ENCODE measurements at regions of chr17 and their contacts with region 1.

Region 1: DNA sequence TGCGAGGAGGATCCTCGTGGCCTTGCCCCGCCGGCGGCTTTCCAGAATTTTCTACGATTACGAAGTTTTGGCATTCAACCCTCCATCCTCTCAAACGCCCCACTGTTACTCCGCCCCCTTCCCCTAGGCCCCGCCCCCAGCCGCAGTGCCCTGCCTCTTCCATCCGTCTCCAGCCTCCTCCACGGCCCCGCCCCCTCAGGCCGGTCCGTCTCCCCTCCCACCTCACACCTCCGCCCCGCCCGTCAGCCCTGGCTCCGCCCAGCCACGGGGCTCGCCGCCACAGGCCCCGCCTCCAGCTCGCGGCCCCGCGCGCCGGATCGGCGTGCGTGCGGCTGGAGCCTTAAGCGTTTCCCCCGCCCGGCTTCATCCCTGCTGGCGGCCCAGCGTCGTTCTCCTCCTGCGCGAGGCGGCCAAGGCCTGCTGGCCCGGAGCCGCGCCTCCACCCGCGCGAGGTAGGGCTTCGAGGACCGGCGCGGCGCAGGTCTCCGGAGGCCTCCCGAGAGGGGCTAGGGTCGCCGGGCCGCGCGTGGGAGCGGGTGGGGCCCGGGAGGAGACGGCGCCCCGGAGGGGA is at the starts of genes C17orf67 and DGKE:
- DNase-seq: peak; percentile 99
- H3K4me3 Mint-ChIP-seq: peak within 1 kb of the TSS; percentile 89
- H3K27ac Mint-ChIP-seq: peak within 1 kb of the TSS; percentile 70
- H3K4me1 Mint-ChIP-seq: peaks cover 55% of the 10 kb centered on the region
- H3K27me3 Mint-ChIP-seq: no peaks in the 10 kb centered on the region
- total RNA-seq, gene C17orf67: 1.9 to 2.2 TPM
- total RNA-seq, gene DGKE: 18.1 to 18.4 TPM

Region 2: GRCh38 chr17:56540836-56541235 is 293.1 kb before region 1 on chr17:
- CTCF ChIA-PET with region 1: no interaction called
- intact Hi-C with region 1: no loop called
- DNase-seq: no peak
- H3K4me3 Mint-ChIP-seq: no peak overlapping the region
- H3K27ac Mint-ChIP-seq: no peak overlapping the region
- H3K4me1 Mint-ChIP-seq: no peaks in the 10 kb centered on the region
- H3K27me3 Mint-ChIP-seq: peaks cover 8% of the 10 kb centered on the region

Region 3: GRCh38 chr17:56598466-56599148 is 235.3 kb before region 1 on chr17:
- CTCF ChIA-PET with region 1: no interaction called
- intact Hi-C with region 1: loop called (anchors 2 kb)
- DNase-seq: peak; percentile 13
- H3K4me3 Mint-ChIP-seq: peak overlapping the region; percentile 52
- H3K27ac Mint-ChIP-seq: peak overlapping the region; percentile 85
- H3K4me1 Mint-ChIP-seq: peaks cover 66% of the 10 kb centered on the region
- H3K27me3 Mint-ChIP-seq: no peaks in the 10 kb centered on the region

Region 4: DNA sequence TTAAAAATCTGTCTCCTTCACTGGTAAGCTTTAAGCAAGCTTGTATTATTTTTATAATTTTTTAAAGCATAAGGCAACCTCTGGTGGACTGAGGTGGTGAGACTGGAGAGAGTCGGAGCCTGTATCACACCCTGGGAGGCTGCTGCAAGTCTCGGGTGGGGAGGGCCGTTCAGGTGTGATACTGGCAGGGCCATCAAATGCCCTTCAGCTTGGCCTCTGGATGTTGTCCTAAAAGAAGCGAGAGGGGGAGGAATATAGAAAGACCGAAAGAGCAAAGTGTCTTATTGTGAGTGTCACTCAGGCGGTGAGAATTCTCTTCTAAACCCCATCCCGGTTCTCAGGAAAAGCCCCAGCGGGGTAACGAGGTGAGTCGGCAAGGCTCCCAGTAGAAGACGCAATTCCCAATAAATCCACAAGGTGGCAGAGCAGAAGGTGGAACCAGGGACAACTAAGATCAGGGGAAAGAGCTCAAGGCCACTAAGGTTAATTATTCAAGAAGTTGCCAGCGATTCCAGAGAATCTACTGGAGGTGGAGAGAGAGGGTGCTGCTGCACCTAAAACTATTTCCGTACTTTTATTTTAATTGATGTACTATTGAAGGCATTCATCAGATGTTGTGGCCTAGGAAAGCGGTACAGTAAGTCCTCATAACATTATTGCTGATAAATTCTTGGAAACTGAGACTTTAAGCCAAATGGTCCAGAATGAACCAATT is 14.3 kb before region 1 on chr17:
- CTCF ChIA-PET with region 1: interaction called, 17 read pairs
- intact Hi-C with region 1: loop called (anchors 1 kb)
- DNase-seq: peak; percentile 88
- H3K4me3 Mint-ChIP-seq: no peak overlapping the region
- H3K27ac Mint-ChIP-seq: no peak overlapping the region
- H3K4me1 Mint-ChIP-seq: peaks cover 8% of the 10 kb centered on the region
- H3K27me3 Mint-ChIP-seq: no peaks in the 10 kb centered on the region

Region 5: GRCh38 chr17:56960596-56961538 is 127.0 kb after region 1 on chr17 and contains the start of gene COIL:
- CTCF ChIA-PET with region 1: no interaction called
- intact Hi-C with region 1: loop called (anchors 1 kb)
- DNase-seq: peak; percentile 97
- H3K4me3 Mint-ChIP-seq: peak within 1 kb of the TSS; percentile 80
- H3K27ac Mint-ChIP-seq: peak within 1 kb of the TSS; percentile 81
- H3K4me1 Mint-ChIP-seq: peaks cover 25% of the 10 kb centered on the region
- H3K27me3 Mint-ChIP-seq: no peaks in the 10 kb centered on the region
- total RNA-seq, gene COIL: 16.9 to 18.2 TPM

Region 6: DNA sequence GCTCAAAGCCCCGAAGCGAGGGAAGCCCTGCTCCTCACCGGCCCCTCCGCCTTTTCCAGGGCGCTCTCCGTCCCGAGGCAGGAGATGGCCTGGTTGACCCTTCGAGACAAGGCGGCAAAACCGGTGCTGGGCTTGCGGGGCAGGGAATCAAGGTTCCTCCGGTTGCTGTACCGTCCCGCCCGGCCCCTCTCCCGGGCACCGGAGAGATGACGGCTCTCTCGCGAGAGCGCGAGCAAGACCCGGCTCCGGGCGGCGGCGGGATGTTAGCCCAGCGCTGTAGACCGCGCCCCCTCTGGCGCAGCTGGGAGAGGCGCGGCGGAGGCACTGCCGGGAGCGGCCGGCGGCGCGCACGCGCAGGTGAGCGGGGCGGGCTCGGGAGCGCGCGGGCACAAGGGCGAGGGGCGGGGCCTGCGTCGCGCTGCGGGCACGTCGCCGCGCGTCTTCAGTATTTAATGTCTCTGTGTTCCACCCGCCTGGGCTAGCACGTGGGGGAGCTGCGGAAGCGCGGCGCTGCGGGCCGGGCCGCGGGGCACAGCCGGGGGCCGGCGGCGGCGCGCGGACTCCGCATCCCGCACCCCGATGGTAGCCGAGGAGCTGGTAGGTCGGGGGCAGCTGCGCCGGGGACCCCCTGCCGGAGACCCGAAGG is 251.0 kb after region 1 on chr17 and contains the start of gene AKAP1:
- CTCF ChIA-PET with region 1: no interaction called
- intact Hi-C with region 1: loop called (anchors 1 kb)
- DNase-seq: peak; percentile 95
- H3K4me3 Mint-ChIP-seq: peak within 1 kb of the TSS; percentile 83
- H3K27ac Mint-ChIP-seq: peak within 1 kb of the TSS; percentile 81
- H3K4me1 Mint-ChIP-seq: peaks cover 43% of the 10 kb centered on the region
- H3K27me3 Mint-ChIP-seq: no peaks in the 10 kb centered on the region
- total RNA-seq, gene AKAP1: 17.6 to 23.1 TPM

Region 7: GRCh38 chr17:57121338-57122042 is 287.6 kb after region 1 on chr17:
- CTCF ChIA-PET with region 1: no interaction called
- intact Hi-C with region 1: no loop called
- DNase-seq: peak; percentile 33
- H3K4me3 Mint-ChIP-seq: no peak overlapping the region
- H3K27ac Mint-ChIP-seq: no peak overlapping the region
- H3K4me1 Mint-ChIP-seq: no peaks in the 10 kb centered on the region
- H3K27me3 Mint-ChIP-seq: no peaks in the 10 kb centered on the region

Measured in activated naive CD4-positive, alpha-beta T cell treated with anti-CD3 and anti-CD28 coated beads for 36 hours (primary cell).